GM13977 (cell line): ENCODE measurements at regions of chr6 and their contacts with region 1.

Region 1: DNA sequence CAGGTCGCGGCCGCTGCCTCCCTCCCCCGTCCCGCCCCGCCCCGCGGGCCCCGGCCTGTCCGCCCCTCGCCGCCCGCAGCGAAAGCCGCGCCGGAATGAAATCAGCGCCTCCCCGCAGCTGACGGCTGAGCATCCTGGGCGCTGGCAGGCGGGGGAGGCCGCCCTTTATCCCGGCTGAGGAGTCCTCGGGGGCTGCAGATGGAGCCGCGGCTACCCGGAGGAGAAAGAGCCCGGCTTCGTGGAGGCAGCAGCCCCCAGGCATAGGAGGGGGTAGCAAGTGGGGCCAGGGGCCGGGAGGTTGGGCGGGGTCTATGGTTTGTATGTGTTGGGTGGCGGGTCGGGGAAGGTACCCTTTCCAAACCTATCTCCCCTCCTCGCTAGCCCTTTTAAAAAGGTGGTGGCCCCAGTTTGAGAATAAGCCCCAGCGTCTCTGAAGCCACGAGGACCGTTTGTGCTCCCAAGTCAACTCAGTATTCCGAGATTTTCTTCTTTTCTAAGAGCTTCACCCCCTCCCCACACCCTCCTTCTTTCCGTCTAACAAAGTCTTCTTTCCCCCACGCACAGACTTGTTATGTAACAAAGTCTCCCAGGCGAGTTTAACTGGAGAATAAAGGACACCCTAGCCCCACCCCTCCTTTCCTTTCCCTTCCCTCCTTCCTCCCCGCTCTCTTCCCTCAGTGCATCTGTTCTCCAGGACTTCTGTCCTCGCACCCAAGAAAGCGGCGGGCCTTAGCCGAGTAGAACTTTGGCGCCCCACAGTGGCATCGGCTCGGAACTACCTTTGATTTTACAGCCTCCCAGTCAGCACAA is 11.0 kb downstream of the POU3F2 start:
- DNase-seq: peak; percentile 84
- CTCF ChIP-seq: peak; percentile 92

Region 2: DNA sequence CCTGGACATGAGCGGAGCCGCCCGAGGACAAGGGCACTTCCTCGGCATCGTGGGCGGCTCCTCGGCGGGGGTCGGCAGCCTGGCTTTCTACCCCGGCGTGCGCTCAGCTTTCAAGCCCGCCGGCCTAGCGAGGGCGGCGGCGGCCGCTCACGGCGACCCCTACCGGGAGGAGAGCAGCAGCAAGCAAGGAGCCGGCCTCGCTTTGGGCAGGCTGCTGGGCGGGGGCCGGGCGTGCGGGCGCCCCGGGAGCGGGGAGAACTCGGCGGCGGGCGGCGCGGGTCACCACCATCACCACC is 767.9 kb after region 1 on chr6:
- in situ Hi-C with region 1: loop called (anchors 25 kb)
- DNase-seq: peak; percentile 81
- CTCF ChIP-seq: peak; percentile 71

Region 3: DNA sequence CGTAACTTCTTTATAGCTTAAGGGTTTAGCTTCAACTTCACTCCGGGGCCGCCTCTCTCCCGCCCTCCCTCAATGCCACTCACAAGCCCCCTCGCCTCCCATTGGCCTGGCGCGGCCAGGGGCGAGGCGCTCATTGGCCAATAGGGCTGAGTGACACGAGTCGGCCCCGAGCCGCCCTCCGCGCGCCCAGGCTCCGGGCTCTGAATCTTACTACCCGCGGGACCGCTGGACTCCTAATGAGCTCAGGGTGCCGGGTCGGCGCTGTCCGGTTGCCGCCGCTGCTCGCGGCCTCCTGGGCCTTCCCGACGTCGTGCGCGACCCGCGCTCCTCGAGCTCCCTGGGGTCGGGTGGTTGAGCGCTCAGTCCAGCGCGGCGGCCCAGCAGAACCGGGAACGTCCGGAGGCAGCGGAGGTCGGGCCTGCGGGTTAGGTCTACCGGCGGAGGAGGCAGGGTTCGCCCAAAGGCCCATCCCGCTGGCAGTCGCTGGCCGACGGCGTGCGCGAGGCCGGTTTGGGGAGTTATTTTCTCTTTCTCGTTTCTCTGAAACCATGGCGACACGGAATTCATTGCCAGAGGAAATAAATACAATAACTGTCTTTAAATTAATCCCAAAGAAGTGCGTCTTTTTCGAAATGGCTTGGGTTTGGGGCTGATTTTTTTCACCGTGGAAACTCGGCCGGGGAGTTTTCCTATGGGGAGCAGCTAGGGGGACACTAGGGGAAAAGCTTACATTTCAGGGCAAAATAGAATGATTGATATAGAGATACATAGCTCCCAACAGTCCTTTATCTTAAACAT is 1619.7 kb after region 1 on chr6 and contains the start of gene SIM1:
- in situ Hi-C with region 1: loop called (anchors 25 kb)
- DNase-seq: peak; percentile 83
- CTCF ChIP-seq: no peak